ENCODE measurements at regions of chr4 and their contacts with region 1.

Region 1: GRCh38 chr4:109690690-109691410 is 12.4 kb downstream of the CASP6 start:
- DNase-seq: no peak
- H3K4me3 ChIP-seq: no peak overlapping the region
- H3K27ac ChIP-seq: no peak overlapping the region
- H3K4me1 ChIP-seq: no peaks in the 10 kb centered on the region
- H3K27me3 ChIP-seq: no peaks in the 10 kb centered on the region
- CTCF ChIP-seq: no peak
- POLR2A ChIP-seq: no peak

Region 2: DNA sequence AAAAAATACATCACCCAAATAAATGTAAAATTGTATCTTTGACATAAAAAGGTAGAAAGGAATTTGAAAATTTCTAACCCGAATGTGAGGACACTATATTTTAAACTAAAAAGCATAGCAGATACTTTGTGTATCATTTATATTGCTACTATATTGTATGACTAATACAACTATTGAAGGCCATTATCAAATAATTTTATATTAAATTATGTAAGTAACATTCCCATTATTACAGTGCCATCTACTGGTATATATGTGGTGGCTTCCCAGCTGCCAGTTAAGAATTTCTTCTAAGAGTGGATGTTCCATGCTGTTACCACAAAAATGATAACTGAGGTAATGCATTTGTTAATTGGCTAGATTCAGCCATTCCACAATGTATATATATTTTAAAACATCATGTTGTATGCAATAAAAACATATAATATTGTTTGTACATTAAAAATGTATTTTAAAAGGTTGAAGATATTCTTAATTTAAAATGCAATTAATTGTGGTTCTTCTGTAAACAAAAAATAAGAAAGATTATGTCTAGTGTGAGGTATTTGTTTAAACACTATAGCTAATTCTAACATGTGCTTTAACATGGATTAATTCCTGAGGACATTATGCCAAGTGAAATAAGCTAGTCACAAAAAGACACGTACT is 287.1 kb after region 1 on chr4:
- intact Hi-C with region 1: loop called (anchors 10 kb)
- DNase-seq: no peak
- H3K4me3 ChIP-seq: no peak overlapping the region
- H3K27ac ChIP-seq: no peak overlapping the region
- H3K4me1 ChIP-seq: no peaks in the 10 kb centered on the region
- H3K27me3 ChIP-seq: no peaks in the 10 kb centered on the region
- CTCF ChIP-seq: peak; percentile 22 to 69 (median 54)
- POLR2A ChIP-seq: no peak

Measured in prostate gland (tissue), 2 donors.